Posterior vena cava (tissue), 2 donors: ENCODE measurements at regions of chr3 and their contacts with region 1.

Region 1: DNA sequence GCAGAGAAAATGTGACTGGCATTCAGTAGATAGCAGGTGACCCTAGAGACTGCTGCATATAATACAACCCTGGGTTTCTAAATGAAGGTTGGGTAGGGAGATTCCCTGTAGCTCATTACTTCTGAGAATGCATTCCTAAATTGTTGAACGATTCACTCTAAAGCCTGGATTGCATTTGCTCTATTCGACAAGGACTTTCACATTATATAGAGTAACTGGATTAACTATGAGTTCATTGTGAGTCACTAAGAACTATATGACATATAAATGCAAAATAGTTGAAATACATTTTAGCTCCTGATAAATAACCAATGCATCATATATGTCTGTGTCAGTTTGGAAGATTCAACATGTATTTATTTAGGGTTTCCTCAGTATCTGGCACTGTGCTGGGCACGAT is 294.7 kb upstream of the CCDC54 start:
- DNase-seq: no peak

Region 2: DNA sequence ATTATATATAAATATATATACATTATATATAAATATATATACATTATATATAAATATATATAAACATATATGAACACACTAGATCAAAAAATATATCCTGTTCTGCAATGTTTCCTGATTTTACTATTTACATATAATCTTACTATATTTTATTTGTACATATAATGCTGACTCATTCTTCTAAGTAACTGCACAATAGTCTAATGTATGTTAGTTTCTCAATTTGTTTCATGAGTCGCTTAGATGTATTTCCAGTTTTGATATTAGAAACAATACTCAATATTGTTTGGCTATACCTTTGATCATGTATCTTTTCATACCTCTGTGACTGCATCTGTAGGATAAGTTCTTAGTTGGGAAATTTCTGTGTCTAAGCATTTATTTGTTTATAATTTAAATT is 375.2 kb before region 1 on chr3:
- intact Hi-C with region 1: loop called in 1 of 2 experiments (anchors 10 kb)
- DNase-seq: no peak

Region 3: GRCh38 chr3:106930086-106930485 is 152.4 kb before region 1 on chr3:
- intact Hi-C with region 1: no loop called
- DNase-seq: no peak